ENCODE measurements at regions of chr7 and their contacts with region 1.

Region 1: DNA sequence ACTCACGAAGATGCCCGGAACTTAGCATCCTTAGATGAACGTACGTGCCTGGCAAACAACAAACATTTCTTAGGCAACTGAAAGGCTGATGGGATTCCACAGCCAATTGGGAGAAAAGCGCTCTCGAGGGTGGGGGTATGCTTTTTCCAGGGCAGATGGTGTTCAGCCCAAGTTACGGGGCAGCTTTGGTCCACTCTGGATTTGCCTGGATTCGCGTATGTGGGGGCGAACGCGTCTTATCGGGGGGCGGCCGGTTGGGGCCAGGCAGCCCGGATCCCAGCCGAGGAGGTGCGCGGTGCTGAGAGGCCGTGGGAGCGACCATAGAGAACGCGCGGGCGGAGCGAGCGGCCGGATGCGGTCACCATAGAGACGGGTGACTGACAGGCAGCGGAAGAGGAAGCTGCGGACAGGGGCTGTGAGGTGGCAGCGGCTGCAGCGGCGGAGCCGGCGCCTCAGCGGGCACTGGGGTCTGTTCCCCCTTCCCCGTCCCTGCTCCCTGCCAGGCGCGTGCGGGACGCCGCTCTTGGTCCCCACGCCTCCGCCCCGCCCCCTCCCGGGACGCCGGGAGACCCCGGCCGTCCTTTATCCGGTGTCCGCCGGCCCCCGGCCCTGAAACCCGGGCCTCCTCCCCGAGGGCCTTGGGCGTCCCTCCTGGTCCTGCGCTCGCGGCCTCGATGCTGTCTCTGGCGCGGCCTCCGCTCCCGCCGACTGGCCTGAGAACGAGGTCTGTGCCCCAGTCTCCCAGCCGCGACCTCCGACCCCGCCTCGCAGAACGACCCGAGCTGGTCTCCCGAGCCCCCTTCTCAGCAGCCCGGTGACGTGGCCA is at the start of gene CHPF2:
- DNase-seq: peak; percentile 89
- H3K4me3 Mint-ChIP-seq: peak within 1 kb of the TSS; percentile 100
- H3K27ac Mint-ChIP-seq: peak within 1 kb of the TSS; percentile 98
- H3K4me1 Mint-ChIP-seq: peaks cover 35% of the 10 kb centered on the region
- H3K27me3 Mint-ChIP-seq: peaks cover 2% of the 10 kb centered on the region
- total RNA-seq, gene CHPF2: 45.6 and 48.5 TPM in 2 replicates

Region 2: DNA sequence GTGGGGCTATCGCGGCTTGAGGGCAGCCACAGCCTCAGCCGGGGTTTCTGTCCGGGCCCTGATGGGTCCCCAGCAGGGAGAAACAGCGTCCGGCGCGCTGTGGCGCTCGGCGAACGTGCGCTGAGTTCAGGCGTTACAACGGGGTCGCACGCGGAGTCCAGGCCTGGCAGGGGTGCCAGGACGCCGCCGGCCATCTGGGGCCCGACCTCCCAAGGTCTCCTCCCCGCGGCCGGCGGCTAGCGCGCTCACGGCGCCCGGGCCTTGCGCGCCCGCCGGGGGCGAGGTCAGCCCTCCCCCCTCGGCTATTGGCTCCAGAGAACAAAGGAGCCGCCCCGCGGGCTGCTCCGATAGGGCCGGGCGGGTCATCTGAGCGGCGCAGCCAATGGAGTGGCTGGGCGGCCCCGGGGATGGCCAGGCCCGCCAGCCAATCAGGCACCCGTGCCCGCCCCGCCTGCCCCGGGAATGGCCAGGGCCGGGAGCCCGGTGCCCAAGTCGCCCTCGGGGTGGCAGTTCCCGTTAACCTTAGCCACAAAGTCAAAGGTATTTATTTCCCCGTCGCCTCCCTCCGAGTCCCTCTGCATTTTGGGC is 853.4 kb before region 1 on chr7 and contains the start of gene ZNF775:
- intact Hi-C with region 1: loop called (anchors 2 kb)
- DNase-seq: peak; percentile 93
- H3K4me3 Mint-ChIP-seq: peak within 1 kb of the TSS; percentile 90
- H3K27ac Mint-ChIP-seq: peak within 1 kb of the TSS; percentile 83
- H3K4me1 Mint-ChIP-seq: peaks cover 59% of the 10 kb centered on the region
- H3K27me3 Mint-ChIP-seq: no peaks in the 10 kb centered on the region
- total RNA-seq, gene ZNF775: 3.9 and 4.5 TPM in 2 replicates

Region 3: DNA sequence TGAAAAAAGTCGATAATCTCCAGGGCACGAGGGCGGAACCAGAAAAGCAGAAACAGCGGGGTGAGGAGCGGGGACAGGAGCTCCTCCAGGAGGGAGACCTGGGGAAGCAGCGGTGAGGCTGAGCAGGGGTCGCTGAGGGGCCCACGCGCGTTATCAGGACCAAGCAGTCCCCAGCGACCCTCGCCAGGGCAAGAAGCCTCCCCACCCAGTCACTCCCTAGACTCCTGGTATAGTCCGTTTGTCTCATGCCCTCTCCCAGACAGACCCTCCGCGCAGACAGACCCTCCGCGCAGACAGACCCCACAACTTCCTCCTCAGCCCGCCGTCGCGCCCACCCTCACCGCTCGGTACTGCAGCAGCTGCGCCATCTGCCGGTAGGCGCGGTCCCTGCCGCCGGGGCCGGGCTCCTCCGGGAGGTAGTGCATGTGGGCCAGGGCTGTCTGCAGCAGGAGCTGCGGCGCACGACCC is 214.3 kb before region 1 on chr7:
- intact Hi-C with region 1: no loop called
- DNase-seq: peak; percentile 73
- H3K4me3 Mint-ChIP-seq: peak overlapping the region; percentile 82
- H3K27ac Mint-ChIP-seq: peak overlapping the region; percentile 81
- H3K4me1 Mint-ChIP-seq: peaks cover 39% of the 10 kb centered on the region
- H3K27me3 Mint-ChIP-seq: peaks cover 19% of the 10 kb centered on the region

Region 4: GRCh38 chr7:151110941-151111645 is 121.2 kb before region 1 on chr7:
- intact Hi-C with region 1: no loop called
- DNase-seq: peak; percentile 55
- H3K4me3 Mint-ChIP-seq: no peak overlapping the region
- H3K27ac Mint-ChIP-seq: no peak overlapping the region
- H3K4me1 Mint-ChIP-seq: no peaks in the 10 kb centered on the region
- H3K27me3 Mint-ChIP-seq: peaks cover 17% of the 10 kb centered on the region

Region 5: DNA sequence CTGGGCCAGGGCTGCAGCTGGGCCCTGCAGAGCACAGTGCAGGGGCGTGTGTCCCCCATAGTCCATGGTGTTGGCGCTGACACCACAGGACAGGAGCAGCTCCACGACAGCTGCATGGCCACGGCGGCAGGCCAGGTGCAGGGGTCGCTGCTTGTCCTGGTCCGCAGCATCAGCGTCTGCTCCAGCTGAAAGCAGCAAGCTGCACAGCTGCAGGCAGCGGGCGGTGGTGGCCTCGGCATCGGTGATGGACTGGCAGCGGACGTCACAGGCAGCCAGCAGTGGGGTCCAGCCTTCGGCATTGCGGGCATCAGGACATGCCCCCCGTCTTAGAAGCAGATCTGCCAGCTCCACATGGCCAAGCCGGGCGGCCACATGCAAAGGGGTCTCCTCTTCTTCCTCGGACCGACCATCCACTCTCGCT is 51.3 kb before region 1 on chr7:
- intact Hi-C with region 1: no loop called
- DNase-seq: no peak
- H3K4me3 Mint-ChIP-seq: no peak overlapping the region
- H3K27ac Mint-ChIP-seq: no peak overlapping the region
- H3K4me1 Mint-ChIP-seq: no peaks in the 10 kb centered on the region
- H3K27me3 Mint-ChIP-seq: peaks cover 7% of the 10 kb centered on the region

Region 6: GRCh38 chr7:151212626-151213025 is 19.7 kb before region 1 on chr7:
- intact Hi-C with region 1: no loop called
- DNase-seq: no peak
- H3K4me3 Mint-ChIP-seq: no peak overlapping the region
- H3K27ac Mint-ChIP-seq: no peak overlapping the region
- H3K4me1 Mint-ChIP-seq: peaks cover 9% of the 10 kb centered on the region
- H3K27me3 Mint-ChIP-seq: no peaks in the 10 kb centered on the region

Region 7: DNA sequence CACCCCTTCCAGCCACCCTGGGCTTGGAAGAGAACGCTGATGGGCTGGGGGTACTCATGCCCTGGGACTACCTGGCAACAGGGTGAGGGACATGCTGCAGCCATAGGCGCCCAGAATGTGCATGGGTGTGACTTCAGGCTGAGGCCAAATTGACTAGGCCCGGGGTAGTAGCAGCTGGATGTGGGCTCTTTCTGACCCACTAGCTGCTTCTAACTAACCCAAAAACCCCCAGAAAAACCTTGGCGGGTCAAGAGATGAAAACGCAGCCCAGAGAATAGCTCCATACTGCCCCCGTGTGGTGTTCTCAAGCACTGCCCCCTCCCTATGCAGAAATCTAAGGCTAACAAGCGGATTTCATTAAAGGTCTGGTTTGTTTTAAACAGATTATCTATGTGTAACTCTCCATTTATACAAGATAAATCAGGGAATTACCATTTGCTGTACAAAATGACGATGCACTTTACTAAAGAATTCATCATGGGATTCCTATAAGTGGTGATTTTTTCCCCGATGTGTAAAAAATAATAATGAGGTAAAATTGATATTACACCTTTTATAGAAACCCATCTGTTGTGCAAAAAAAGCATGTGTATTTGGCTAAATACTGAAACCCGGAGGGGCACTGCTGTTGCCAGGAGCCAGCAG is 12.0 kb after region 1 on chr7:
- intact Hi-C with region 1: loop called (anchors 1 kb)
- DNase-seq: peak; percentile 49
- H3K4me3 Mint-ChIP-seq: peak overlapping the region; percentile 49
- H3K27ac Mint-ChIP-seq: no peak overlapping the region
- H3K4me1 Mint-ChIP-seq: peaks cover 26% of the 10 kb centered on the region
- H3K27me3 Mint-ChIP-seq: peaks cover 32% of the 10 kb centered on the region

Region 8: GRCh38 chr7:151304856-151305255 is 72.6 kb after region 1 on chr7:
- intact Hi-C with region 1: loop called (anchors 1 kb)
- DNase-seq: no peak
- H3K4me3 Mint-ChIP-seq: peak overlapping the region; percentile 31
- H3K27ac Mint-ChIP-seq: no peak overlapping the region
- H3K4me1 Mint-ChIP-seq: peaks cover 14% of the 10 kb centered on the region
- H3K27me3 Mint-ChIP-seq: peaks cover 33% of the 10 kb centered on the region

Region 9: DNA sequence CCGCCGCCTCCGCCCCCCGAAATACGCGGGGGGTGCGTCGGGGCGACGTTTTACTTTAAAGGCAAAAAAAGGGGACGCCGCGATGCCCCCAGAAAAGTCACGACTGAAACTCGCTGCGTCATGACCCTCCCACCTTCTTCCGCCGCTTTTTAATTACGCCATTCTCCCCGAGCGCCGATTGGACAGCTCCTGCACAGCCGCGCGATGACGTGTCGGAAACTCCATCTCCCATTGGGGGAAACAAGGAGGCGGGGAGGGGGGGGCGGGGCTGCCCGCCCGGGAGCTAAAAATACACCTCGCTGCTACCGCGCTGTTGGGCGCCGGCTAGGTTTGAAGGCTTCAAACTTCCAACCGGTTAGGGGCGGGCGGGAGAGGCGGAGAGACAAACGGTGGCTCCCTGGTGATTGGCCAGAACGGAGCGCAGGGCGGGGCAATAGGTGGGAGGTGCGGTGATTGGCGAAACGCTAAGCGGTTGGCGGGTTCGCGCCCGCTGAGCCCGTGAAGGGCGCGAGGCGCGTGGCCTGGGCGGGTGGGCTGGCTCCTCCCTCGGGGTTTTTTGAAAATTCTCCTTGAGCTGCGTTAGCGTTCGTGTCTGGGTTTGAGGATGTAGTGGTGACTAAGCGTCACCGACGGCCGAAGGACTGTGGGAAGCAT is 287.6 kb after region 1 on chr7 and contains the start of gene RHEB:
- intact Hi-C with region 1: loop called (anchors 1 kb)
- DNase-seq: peak; percentile 97
- H3K4me3 Mint-ChIP-seq: peak within 1 kb of the TSS; percentile 94
- H3K27ac Mint-ChIP-seq: peak within 1 kb of the TSS; percentile 99
- H3K4me1 Mint-ChIP-seq: peaks cover 32% of the 10 kb centered on the region
- H3K27me3 Mint-ChIP-seq: peaks cover 10% of the 10 kb centered on the region
- total RNA-seq, gene RHEB: 62.5 and 65.5 TPM in 2 replicates

Region 10: DNA sequence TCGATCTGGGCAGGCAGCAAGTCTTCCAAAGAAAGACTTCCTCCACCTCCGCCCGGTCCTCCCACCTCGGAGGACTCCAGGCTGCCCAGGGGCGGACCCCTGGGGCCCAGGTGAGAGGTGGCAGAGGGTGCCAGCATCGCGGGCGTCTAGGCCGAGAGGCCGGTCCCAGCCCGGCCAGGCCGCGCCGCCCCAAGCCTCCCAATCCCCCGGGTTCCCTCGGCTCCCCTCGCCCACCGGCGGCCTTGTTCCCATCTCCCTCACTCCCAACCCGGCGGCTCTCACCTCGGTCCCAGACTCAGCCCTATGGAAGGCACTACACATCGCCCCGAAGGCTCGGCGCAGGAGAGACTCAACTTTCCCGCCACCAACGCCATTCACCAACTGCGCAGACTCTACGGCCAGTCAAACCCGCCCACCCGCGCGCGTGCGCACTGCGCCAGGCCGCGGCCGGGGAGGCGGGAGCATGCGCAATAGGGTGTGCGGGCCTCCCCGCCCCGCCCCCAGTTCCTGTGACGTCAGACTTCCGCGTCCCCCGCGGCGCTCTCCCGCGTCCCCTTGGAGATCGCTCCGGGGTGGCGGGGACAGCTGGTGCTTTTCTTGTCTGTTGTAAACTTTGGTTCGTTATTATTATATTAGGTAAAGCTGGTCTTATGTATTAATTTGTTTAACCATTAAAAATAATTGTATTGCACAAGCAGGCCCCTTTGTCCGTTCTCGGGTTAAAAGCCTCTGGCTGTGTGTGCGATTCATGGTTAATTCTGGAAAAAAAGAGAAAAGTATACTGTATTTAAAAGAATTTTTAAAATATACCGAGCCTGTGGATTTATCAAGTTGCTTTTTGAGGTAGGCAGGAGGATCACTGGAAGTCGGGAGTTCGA is 1443.7 kb after region 1 on chr7 and contains the start of gene XRCC2:
- intact Hi-C with region 1: loop called (anchors 10 kb)
- DNase-seq: peak; percentile 94
- H3K4me3 Mint-ChIP-seq: peak within 1 kb of the TSS; percentile 92
- H3K27ac Mint-ChIP-seq: peak within 1 kb of the TSS; percentile 95
- H3K4me1 Mint-ChIP-seq: peaks cover 25% of the 10 kb centered on the region
- H3K27me3 Mint-ChIP-seq: no peaks in the 10 kb centered on the region
- total RNA-seq, gene XRCC2: 24.0 and 24.5 TPM in 2 replicates

Measured in activated T-helper 1 cell treated with anti-CD3 and anti-CD28 coated beads, Interleukin-12 subunit alpha, Interleukin-12 subunit beta, Interleukin-2, Interleukin-4 antibody, amounts not matched to agents 30 ng/mL and 10 ng/mL and 1 ng/mL, durations not matched to agents 14 hours and 24 hours and 36 hours (primary cell).